Kidney (tissue), 22 donors: ENCODE measurements at regions of chr9 and their contacts with region 1.

Region 1: GRCh38 chr9:68584189-68585033 is 43.7 kb upstream of the TMEM252 start:
- DNase-seq: peak; percentile 88 to 97 (median 90)
- H3K4me3 ChIP-seq: no peak overlapping the region
- H3K27ac ChIP-seq: no peak overlapping the region
- H3K4me1 ChIP-seq: no peaks in the 10 kb centered on the region
- H3K27me3 ChIP-seq: no peaks in the 10 kb centered on the region
- CTCF ChIP-seq: peak; percentile 94

Region 2: GRCh38 chr9:68631811-68632210 is 47.4 kb after region 1 on chr9:
- intact Hi-C with region 1: no loop called
- DNase-seq: no peak
- H3K4me3 ChIP-seq: no peak overlapping the region
- H3K27ac ChIP-seq: no peak overlapping the region
- H3K4me1 ChIP-seq: no peaks in the 10 kb centered on the region
- H3K27me3 ChIP-seq: no peaks in the 10 kb centered on the region
- CTCF ChIP-seq: no peak

Region 3: DNA sequence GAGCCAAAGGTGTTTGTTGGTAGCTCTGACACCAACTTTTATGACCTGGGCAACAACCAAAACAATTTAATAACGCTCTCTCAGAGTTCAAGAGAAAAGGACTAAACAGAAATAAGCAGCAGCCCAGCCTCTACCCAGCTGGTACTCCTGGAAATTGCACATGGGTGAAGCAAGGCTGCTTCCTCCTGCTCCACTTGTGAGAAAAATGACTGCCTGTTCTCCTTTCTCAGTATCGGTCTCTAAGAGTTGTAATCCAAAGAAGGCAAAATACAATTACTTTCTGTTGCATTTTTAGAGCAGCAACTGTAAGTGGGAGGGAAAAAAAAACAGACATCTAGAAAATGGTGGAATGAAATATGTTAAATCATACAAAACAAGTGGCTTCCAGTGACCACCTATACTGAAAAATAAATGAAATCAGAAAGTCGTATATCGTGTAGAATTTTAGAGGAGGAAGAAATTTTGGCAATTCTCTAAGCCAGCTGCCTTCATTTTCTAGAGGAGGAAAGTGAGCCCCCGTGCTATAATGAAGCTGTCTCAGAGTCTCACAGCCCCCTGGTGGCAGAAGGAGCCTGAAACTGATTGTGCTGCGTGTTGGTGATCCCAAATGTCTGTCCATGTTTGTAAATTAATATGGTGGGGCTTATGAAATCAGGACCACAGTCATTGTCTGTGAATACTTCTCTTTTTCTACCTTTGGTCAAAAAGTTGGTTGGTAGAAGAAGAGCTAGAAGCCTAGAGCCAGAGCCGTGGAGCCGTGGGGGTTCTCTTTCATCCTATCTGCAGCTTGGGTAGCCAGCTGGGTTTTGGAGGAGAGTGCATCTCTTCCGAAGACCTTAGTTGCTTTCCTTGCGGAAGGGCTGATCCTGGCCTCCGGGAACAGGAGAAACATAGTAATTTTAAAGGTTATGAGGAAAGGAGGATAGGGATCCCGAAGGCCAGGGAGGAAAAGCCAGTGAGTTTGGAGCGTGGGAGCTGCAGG is 260.5 kb after region 1 on chr9:
- intact Hi-C with region 1: loop called (anchors 10 kb)
- DNase-seq: peak in 3 of 5 donors; percentile 43 to 76 (median 55)
- H3K4me3 ChIP-seq: no peak overlapping the region
- H3K27ac ChIP-seq: no peak overlapping the region
- H3K4me1 ChIP-seq: no peaks in the 10 kb centered on the region
- H3K27me3 ChIP-seq: no peaks in the 10 kb centered on the region
- CTCF ChIP-seq: peak; percentile 64

Region 4: GRCh38 chr9:68974431-68974830 is 390.0 kb after region 1 on chr9:
- intact Hi-C with region 1: no loop called
- DNase-seq: no peak
- H3K4me3 ChIP-seq: no peak overlapping the region
- H3K27ac ChIP-seq: no peak overlapping the region
- H3K4me1 ChIP-seq: no peaks in the 10 kb centered on the region
- H3K27me3 ChIP-seq: no peaks in the 10 kb centered on the region
- CTCF ChIP-seq: no peak

Region 5: DNA sequence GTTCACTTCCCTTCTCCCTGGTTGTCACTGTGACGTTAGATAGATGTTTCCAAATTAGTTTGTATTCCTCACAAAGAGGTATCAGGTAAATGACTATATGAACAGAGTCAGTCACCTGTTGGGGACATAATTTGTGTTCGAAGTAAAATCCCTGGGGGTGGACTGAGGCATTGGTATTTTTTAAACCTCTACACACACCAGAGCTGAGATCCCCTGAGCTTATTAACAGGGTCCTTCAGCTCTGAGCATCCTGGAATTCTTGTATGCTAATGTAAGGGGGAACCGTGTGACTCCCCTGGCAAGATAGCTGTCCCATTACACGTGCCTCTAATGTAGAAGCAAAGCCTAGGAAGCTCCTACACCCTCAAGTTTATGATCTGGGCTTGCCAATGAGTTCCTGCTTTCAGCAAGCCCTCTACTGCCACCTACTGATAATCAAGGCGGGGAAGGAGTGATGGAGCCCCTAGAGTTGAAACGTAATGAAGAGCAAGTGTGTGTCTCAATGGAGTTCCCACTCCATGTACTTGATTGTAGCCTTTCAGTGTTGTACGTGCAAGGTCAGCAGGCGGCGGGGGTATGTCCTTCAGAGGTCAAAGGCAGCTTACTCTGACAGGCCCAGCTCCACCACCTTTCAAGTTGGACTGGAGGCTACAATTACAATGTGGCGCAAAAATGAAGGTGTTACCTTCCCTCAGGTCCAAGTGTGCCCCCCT is 415.1 kb after region 1 on chr9:
- intact Hi-C with region 1: loop called (anchors 10 kb)
- DNase-seq: peak in 4 of 5 donors; percentile 73 to 92 (median 78)
- H3K4me3 ChIP-seq: no peak overlapping the region
- H3K27ac ChIP-seq: no peak overlapping the region
- H3K4me1 ChIP-seq: no peaks in the 10 kb centered on the region
- H3K27me3 ChIP-seq: no peaks in the 10 kb centered on the region
- CTCF ChIP-seq: peak; percentile 85

Region 6: GRCh38 chr9:69158471-69158870 is 574.1 kb after region 1 on chr9:
- intact Hi-C with region 1: no loop called
- DNase-seq: no peak
- H3K4me3 ChIP-seq: no peak overlapping the region
- H3K27ac ChIP-seq: no peak overlapping the region
- H3K4me1 ChIP-seq: peaks cover 0 to 7% (median 0%) of the 10 kb centered on the region in 3 donors
- H3K27me3 ChIP-seq: no peaks in the 10 kb centered on the region
- CTCF ChIP-seq: no peak